ENCODE measurements at regions of chr5 and their contacts with region 1.

Region 1: GRCh38 chr5:175718401-175719108 is 60.7 kb downstream of the HRH2 start:
- DNase-seq: peak; percentile 56
- H3K4me3 Mint-ChIP-seq: no peak overlapping the region
- H3K27ac Mint-ChIP-seq: no peak overlapping the region
- H3K4me1 Mint-ChIP-seq: no peaks in the 10 kb centered on the region
- H3K27me3 Mint-ChIP-seq: peaks cover 35% of the 10 kb centered on the region
- CTCF ChIP-seq: peak; percentile 44

Region 2: GRCh38 chr5:175534070-175534932 is 184.3 kb before region 1 on chr5:
- CTCF ChIA-PET with region 1: interaction called, 10 read pairs
- intact Hi-C with region 1: loop called (anchors 2 kb)
- DNase-seq: peak; percentile 88
- H3K4me3 Mint-ChIP-seq: peak overlapping the region; percentile 30
- H3K27ac Mint-ChIP-seq: no peak overlapping the region
- H3K4me1 Mint-ChIP-seq: peaks cover 6% of the 10 kb centered on the region
- H3K27me3 Mint-ChIP-seq: peaks cover 12% of the 10 kb centered on the region
- CTCF ChIP-seq: peak; percentile 99

Region 3: GRCh38 chr5:175729829-175730277 is 11.3 kb after region 1 on chr5:
- CTCF ChIA-PET with region 1: interaction called, 10 read pairs
- intact Hi-C with region 1: no loop called
- DNase-seq: peak; percentile 98
- H3K4me3 Mint-ChIP-seq: no peak overlapping the region
- H3K27ac Mint-ChIP-seq: no peak overlapping the region
- H3K4me1 Mint-ChIP-seq: no peaks in the 10 kb centered on the region
- H3K27me3 Mint-ChIP-seq: peaks cover 88% of the 10 kb centered on the region
- CTCF ChIP-seq: peak; percentile 99

Region 4: GRCh38 chr5:175826980-175827379 is 108.4 kb after region 1 on chr5:
- CTCF ChIA-PET with region 1: no interaction called
- intact Hi-C with region 1: no loop called
- DNase-seq: no peak
- H3K4me3 Mint-ChIP-seq: no peak overlapping the region
- H3K27ac Mint-ChIP-seq: no peak overlapping the region
- H3K4me1 Mint-ChIP-seq: no peaks in the 10 kb centered on the region
- H3K27me3 Mint-ChIP-seq: peaks cover 65% of the 10 kb centered on the region
- CTCF ChIP-seq: no peak